Esophagus squamous epithelium (tissue), 5 donors: ENCODE measurements at regions of chr12 and their contacts with region 1.

Region 1: GRCh38 chr12:17866802-17867201 is 223.2 kb downstream of the RERGL start:
- DNase-seq: no peak
- H3K4me3 ChIP-seq: no peak overlapping the region
- H3K27ac ChIP-seq: no peak overlapping the region
- H3K4me1 ChIP-seq: no peaks in the 10 kb centered on the region
- H3K27me3 ChIP-seq: no peaks in the 10 kb centered on the region
- CTCF ChIP-seq: no peak
- POLR2A ChIP-seq: no peak

Region 2: GRCh38 chr12:17778242-17778641 is 88.6 kb before region 1 on chr12:
- intact Hi-C with region 1: loop called (anchors 5 kb)
- DNase-seq: no peak
- H3K4me3 ChIP-seq: no peak overlapping the region
- H3K27ac ChIP-seq: no peak overlapping the region
- H3K4me1 ChIP-seq: no peaks in the 10 kb centered on the region
- H3K27me3 ChIP-seq: no peaks in the 10 kb centered on the region
- CTCF ChIP-seq: no peak
- POLR2A ChIP-seq: no peak